ENCODE measurements at regions of chr16 and their contacts with region 1.

Region 1: DNA sequence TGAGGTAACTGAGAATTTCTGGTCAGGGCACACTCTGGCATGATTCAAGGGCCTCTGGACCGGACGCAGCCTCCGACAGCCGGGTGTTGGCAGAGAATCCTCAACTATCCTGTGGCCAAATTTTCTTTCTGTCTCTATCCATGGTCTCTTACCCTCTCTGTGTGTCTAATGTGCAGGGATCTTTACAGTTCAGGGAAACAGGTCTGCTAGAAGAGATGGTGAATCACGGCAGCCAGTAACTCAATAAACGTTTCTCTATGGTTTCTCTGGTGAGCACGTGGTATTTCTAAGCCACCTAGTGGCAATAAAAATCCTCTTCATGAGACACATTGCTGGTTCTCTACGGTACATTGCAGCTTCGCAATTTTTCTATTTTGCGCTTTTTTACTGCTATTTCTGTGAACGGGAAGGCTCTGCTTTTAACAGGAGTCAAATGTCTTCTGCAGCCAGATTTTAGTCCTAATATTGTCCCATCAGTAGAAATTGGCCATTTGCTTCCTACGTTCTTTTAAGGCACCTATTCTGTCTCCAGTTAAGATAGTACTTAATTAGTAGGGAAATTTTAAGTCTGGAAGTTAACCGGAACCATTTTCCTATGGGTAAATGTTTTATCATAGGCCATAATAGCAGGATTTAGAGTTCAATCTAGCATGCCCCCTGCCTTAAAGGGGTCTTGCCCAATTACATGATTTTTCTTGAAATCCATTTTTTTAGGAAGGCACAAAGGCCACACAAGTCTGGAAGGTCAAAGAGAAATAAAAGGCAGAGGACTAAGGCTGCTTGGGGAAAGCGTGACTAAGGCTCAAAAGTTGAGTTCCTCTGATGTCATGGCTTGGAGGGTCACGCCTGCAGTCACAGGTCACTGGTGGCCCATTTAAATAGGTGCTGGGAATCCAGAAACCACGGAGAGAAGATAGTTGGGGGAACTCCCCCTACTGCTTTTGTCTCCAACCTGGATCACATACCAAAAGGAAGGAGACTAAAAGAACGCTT is 31.5 kb downstream of the QPRT start:
- H3K4me3 ChIP-seq: no peak overlapping the region
- H3K27ac ChIP-seq: no peak overlapping the region
- H3K4me1 ChIP-seq: peaks cover 6% of the 10 kb centered on the region; the same call in 1 of the 2 replicates
- CTCF ChIP-seq: no peak

Region 2: GRCh38 chr16:29700253-29700987 is 10.1 kb before region 1 on chr16:
- CTCF ChIA-PET with region 1: interaction called, 16 read pairs
- POLR2A ChIA-PET with region 1: no interaction called
- H3K4me3 ChIP-seq: no peak overlapping the region
- H3K27ac ChIP-seq: no peak overlapping the region
- H3K4me1 ChIP-seq: no peaks in the 10 kb centered on the region
- CTCF ChIP-seq: peak; percentile 75

Region 3: GRCh38 chr16:29729116-29729521 is 18.6 kb after region 1 on chr16:
- CTCF ChIA-PET with region 1: interaction called, 20 read pairs
- POLR2A ChIA-PET with region 1: no interaction called
- H3K4me3 ChIP-seq: no peak overlapping the region
- H3K27ac ChIP-seq: no peak overlapping the region
- H3K4me1 ChIP-seq: no peaks in the 10 kb centered on the region
- CTCF ChIP-seq: peak; percentile 78

Measured in HEK293 (cell line).